ENCODE measurements at regions of chr16 and their contacts with region 1.

Region 1: GRCh38 chr16:24819462-24820040 is 26.2 kb upstream of the SLC5A11 start:
- DNase-seq: no peak
- ATAC-seq: no peak
- H3K4me3 ChIP-seq: no peak overlapping the region
- H3K27ac ChIP-seq: peak overlapping the region; percentile 18
- H3K4me1 ChIP-seq: no peaks in the 10 kb centered on the region
- H3K27me3 ChIP-seq: no peaks in the 10 kb centered on the region
- CTCF ChIP-seq: no peak

Region 2: DNA sequence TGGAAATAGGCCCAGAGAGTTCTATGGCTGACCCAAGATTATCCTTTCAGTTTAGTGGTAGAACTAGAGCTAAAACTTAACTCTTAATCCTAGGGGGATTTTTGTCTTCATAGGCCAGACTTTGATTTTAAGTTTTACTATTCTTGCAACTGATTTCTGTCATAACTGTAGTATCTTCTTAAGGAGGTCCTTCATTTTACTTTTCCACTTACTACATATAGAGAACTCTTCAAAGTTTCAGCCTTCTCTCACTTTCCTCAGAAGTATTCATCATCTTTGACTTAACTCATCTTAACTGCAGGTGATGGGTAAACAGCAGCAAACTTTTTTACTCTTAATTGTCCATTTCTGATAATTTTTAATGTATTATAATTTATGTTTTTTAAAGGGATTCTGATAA is 256.7 kb before region 1 on chr16:
- intact Hi-C with region 1: loop called in 1 of 2 experiments (anchors 5 kb)
- DNase-seq: no peak
- ATAC-seq: no peak
- H3K4me3 ChIP-seq: no peak overlapping the region
- H3K27ac ChIP-seq: no peak overlapping the region
- H3K4me1 ChIP-seq: no peaks in the 10 kb centered on the region
- H3K27me3 ChIP-seq: no peaks in the 10 kb centered on the region
- CTCF ChIP-seq: no peak

Region 3: GRCh38 chr16:24955982-24956731 is 136.6 kb after region 1 on chr16:
- intact Hi-C with region 1: loop called in 1 of 2 experiments (anchors 5 kb)
- DNase-seq: no peak
- ATAC-seq: peak in 1 of 4 donors; percentile 51
- H3K4me3 ChIP-seq: no peak overlapping the region
- H3K27ac ChIP-seq: no peak overlapping the region
- H3K4me1 ChIP-seq: no peaks in the 10 kb centered on the region
- H3K27me3 ChIP-seq: no peaks in the 10 kb centered on the region
- CTCF ChIP-seq: no peak